PC-9 (cell line): ENCODE measurements at regions of chr6 and their contacts with region 1.

Region 1: GRCh38 chr6:8707956-8708772 is 272.8 kb upstream of the SLC35B3 start:
- DNase-seq: peak in 1 of 2 experiments; percentile 56
- H3K4me3 ChIP-seq: no peak overlapping the region
- H3K27ac ChIP-seq: no peak overlapping the region
- H3K4me1 ChIP-seq: no peaks in the 10 kb centered on the region
- H3K27me3 ChIP-seq: no peaks in the 10 kb centered on the region
- CTCF ChIP-seq: no peak; the same call in 1 of the 2 replicates

Region 2: DNA sequence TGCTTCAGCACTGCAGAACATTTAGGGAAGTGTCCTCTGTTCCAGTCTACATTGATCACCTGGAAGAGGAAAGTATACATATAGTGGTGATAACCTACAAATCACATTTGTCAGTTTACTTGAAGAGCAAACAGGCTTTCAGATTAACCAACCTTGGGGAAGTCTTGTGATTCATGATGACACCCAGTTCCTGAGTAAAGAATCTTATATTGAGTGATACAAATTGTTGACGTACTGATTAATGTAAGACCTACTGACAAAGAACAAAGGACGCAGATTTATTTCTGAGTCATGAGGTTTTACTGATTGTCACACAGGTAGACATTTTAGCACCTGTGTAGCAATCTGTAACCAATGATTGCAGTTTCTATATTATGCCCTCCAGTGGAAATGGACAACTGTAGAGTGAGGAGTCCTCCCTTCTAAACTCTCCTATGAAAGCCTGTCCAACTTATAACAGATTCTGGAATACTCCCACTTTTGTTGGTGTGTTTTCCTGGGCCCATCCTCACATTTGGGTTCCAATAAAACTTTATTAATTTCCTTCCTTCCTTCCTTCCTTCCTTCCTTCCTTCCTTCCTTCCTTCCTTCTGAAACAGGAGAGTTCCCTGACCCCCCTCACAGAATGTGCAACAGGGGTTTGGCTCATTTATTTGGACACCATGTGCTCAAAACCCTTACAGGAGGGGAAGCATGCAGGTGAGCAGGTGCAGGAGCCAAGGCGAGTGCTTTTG is 386.3 kb before region 1 on chr6:
- CTCF ChIA-PET with region 1: no interaction called
- POLR2A ChIA-PET with region 1: no interaction called
- intact Hi-C with region 1: no loop called
- DNase-seq: peak in 1 of 2 experiments; percentile 35
- H3K4me3 ChIP-seq: no peak overlapping the region
- H3K27ac ChIP-seq: no peak overlapping the region
- H3K4me1 ChIP-seq: no peaks in the 10 kb centered on the region
- H3K27me3 ChIP-seq: no peaks in the 10 kb centered on the region
- CTCF ChIP-seq: no peak

Region 3: DNA sequence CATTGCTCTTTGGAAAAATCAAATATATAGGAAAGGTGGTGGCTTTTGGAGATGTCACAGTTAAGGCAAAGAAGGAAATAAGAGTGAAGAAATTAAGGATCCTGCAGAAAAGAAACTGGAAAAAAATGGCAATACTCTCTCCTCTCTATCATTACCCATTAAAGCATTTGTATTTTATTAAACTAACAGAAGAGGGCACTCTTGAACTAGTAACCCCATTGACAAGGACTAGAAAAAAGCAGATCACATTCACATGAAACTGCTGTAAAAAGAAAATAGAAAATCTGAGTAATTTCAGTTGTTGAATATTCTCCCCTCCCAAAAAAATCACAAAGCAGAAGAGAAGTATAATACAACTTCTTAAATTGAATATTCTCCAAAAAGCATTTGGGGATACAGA is 168.7 kb before region 1 on chr6:
- CTCF ChIA-PET with region 1: no interaction called
- POLR2A ChIA-PET with region 1: no interaction called
- intact Hi-C with region 1: loop called (anchors 5 kb)
- DNase-seq: no peak
- H3K4me3 ChIP-seq: no peak overlapping the region
- H3K27ac ChIP-seq: no peak overlapping the region
- H3K4me1 ChIP-seq: no peaks in the 10 kb centered on the region
- H3K27me3 ChIP-seq: no peaks in the 10 kb centered on the region
- CTCF ChIP-seq: peak; percentile 51

Region 4: DNA sequence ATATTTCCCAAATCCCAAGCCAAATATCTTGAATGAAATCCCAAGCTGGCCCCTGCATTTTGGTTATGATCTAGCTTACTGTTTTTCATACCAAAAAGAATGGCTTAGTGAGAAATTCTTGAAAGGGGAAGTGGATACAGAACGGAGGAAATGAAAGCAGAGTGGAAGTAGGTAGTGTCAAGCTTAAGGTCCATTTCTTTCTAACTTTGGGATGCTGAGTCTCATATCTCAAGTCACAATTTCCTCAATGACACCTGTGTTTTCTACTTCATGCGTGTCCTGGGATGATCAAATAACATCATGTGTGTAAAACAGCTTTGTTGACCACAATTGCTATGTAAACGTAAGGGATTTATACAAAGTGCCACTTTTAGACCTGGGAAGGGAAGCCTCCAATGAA is 34.0 kb before region 1 on chr6:
- CTCF ChIA-PET with region 1: no interaction called
- POLR2A ChIA-PET with region 1: no interaction called
- intact Hi-C with region 1: no loop called
- DNase-seq: no peak
- H3K4me3 ChIP-seq: no peak overlapping the region
- H3K27ac ChIP-seq: no peak overlapping the region
- H3K4me1 ChIP-seq: no peaks in the 10 kb centered on the region
- H3K27me3 ChIP-seq: no peaks in the 10 kb centered on the region
- CTCF ChIP-seq: no peak

Region 5: GRCh38 chr6:9007062-9007461 is 298.9 kb after region 1 on chr6:
- CTCF ChIA-PET with region 1: no interaction called
- POLR2A ChIA-PET with region 1: no interaction called
- intact Hi-C with region 1: no loop called
- DNase-seq: no peak
- H3K4me3 ChIP-seq: no peak overlapping the region
- H3K27ac ChIP-seq: no peak overlapping the region
- H3K4me1 ChIP-seq: no peaks in the 10 kb centered on the region
- H3K27me3 ChIP-seq: no peaks in the 10 kb centered on the region
- CTCF ChIP-seq: no peak

Region 6: DNA sequence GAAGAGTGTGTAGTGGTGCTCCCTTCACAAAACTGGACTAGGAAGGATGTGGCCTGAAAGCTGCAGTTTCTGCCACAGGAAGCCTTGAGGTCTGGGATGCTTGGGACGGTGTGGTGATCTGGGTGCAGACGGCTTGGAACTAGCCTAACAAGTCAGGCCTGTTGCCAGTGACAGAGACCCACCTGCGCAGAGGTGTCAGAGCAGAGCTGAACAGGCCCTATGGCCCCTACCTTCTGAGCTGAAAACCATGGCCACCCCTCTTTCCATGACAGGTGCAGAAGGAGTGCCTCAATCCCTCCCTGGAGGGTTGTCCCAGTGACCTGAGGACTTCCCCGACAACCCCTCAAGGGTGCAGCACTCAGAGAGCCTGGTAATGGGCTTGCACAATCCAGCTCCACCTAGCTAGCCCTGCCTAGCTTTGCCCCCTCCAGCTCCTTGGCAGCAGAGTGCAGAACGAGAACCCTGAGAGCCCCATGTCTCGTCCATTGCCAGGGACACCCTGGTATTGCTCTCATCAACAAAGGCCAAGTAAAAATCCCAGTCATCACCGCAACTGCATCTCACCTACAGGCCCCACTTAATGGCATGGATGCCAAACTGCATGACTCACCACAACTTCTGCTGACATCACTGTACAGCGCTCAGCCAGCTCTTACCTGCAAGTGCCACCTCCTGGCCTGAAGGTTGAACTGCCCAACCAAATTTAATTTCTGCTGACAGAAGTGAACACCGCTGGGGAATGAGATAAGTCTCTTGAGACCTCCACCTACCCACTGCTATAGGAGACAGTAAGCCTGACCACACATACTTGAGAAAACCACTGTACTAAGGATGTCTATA is 1143.6 kb after region 1 on chr6:
- CTCF ChIA-PET with region 1: no interaction called
- POLR2A ChIA-PET with region 1: no interaction called
- intact Hi-C with region 1: loop called (anchors 10 kb)
- DNase-seq: peak; percentile 55 to 57
- H3K4me3 ChIP-seq: no peak overlapping the region
- H3K27ac ChIP-seq: no peak overlapping the region
- H3K4me1 ChIP-seq: no peaks in the 10 kb centered on the region
- H3K27me3 ChIP-seq: no peaks in the 10 kb centered on the region
- CTCF ChIP-seq: peak; percentile 36; the same call in 1 of the 2 replicates